A673 (cell line): ENCODE measurements at regions of chr1 and their contacts with region 1.

Region 1: DNA sequence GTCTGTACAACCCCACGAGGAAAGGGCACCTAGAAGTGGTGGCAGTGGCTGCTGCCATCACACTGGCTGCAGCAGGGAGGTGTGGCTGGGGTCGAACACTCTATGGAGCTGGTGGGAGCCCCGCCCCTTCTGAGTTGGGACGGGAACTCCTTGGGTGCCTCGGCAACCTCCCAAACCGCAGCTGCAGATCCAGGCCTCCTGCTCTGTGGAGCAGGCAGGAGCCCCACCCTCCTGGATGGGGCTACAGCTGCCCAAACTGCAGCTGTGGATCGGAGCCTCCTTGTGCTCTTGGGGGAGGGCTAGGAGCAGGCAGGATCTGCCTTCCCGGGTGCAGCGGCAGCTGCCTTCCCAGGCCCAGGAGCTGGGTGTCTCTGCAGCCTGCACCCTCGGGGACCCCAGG is 38.9 kb upstream of the TARDBP start:
- DNase-seq: peak; percentile 41
- H3K4me3 ChIP-seq: no peak overlapping the region
- H3K27ac ChIP-seq: no peak overlapping the region
- H3K4me1 ChIP-seq: peaks cover 14% of the 10 kb centered on the region
- H3K27me3 ChIP-seq: no peaks in the 10 kb centered on the region
- CTCF ChIP-seq: no peak

Region 2: GRCh38 chr1:10951961-10952360 is 21.6 kb before region 1 on chr1:
- CTCF ChIA-PET with region 1: no interaction called
- POLR2A ChIA-PET with region 1: no interaction called
- intact Hi-C with region 1: no loop called
- DNase-seq: no peak
- H3K4me3 ChIP-seq: no peak overlapping the region
- H3K27ac ChIP-seq: no peak overlapping the region
- H3K4me1 ChIP-seq: no peaks in the 10 kb centered on the region
- H3K27me3 ChIP-seq: no peaks in the 10 kb centered on the region
- CTCF ChIP-seq: no peak

Region 3: GRCh38 chr1:10990828-10991227 is 17.3 kb after region 1 on chr1:
- CTCF ChIA-PET with region 1: no interaction called
- POLR2A ChIA-PET with region 1: interaction called, 11 read pairs
- intact Hi-C with region 1: no loop called
- DNase-seq: no peak
- H3K4me3 ChIP-seq: no peak overlapping the region
- H3K27ac ChIP-seq: no peak overlapping the region
- H3K4me1 ChIP-seq: peaks cover 11% of the 10 kb centered on the region
- H3K27me3 ChIP-seq: no peaks in the 10 kb centered on the region
- CTCF ChIP-seq: no peak

Region 4: GRCh38 chr1:11237356-11237755 is 263.8 kb after region 1 on chr1:
- CTCF ChIA-PET with region 1: no interaction called
- POLR2A ChIA-PET with region 1: no interaction called
- intact Hi-C with region 1: no loop called
- DNase-seq: no peak
- H3K4me3 ChIP-seq: no peak overlapping the region
- H3K27ac ChIP-seq: no peak overlapping the region
- H3K4me1 ChIP-seq: no peaks in the 10 kb centered on the region
- H3K27me3 ChIP-seq: no peaks in the 10 kb centered on the region
- CTCF ChIP-seq: no peak